ENCODE measurements at regions of chr5 and their contacts with region 1.

Region 1: GRCh38 chr5:145915970-145916638 is 20.3 kb upstream of the SH3RF2 start:
- DNase-seq: no peak
- H3K4me3 ChIP-seq: no peak overlapping the region
- H3K27ac ChIP-seq: no peak overlapping the region
- H3K4me1 ChIP-seq: no peaks in the 10 kb centered on the region
- H3K27me3 ChIP-seq: no peaks in the 10 kb centered on the region
- CTCF ChIP-seq: no peak
- POLR2A ChIP-seq: no peak

Region 2: DNA sequence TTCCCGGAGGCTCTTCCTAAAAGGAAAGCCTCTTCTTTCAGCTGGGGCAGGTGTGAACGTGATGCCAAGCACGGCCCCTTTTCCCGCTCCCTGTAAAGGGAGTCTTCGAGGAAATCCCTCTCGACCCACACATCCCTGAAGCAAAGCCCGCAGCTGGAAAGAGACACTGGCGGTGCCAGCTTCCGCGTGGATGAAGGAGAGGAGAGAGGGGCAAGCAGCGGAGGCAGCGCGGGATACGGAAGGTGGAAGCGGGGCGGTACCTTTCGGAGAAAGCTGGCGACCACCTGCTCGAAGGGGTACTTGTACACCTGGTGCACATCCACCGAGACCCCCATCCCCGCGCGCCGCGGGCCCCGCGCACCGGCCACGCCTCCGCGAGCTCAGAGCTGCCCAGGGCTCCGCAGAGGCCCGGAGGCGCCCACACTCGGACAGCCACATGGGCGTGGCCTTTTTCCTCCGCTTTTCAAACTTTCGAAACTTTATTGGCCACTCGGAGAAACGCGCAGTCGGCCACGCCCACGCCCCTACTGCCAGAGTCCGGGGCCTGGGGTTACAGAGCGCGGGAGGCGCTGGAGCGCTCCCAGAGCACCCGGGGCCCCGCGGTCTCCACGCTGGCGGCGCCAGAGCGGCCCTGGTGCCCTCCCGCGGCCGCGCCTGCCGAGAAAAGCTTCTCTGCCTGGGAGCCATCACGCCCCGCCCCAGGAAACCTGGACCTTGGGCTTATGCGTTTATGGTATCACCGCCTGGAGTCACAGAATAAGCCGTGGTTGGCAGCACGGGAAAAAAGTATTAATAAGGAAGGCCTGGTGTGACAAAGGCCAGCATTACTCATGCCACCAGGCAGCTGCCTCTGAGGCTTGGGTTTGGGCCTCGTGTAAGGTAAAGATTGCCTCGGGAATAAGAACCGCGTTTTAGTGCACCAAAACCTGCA is 80.9 kb before region 1 on chr5 and contains the start of gene PRELID2:
- intact Hi-C with region 1: no loop called
- DNase-seq: peak; percentile 78 to 85
- H3K4me3 ChIP-seq: peak within 1 kb of the TSS; percentile 58 to 85 (median 75)
- H3K27ac ChIP-seq: peak within 1 kb of the TSS; percentile 63 to 86
- H3K4me1 ChIP-seq: peaks cover 0 to 7% of the 10 kb centered on the region in 2 donors
- H3K27me3 ChIP-seq: no peaks in the 10 kb centered on the region
- CTCF ChIP-seq: no peak
- POLR2A ChIP-seq: no peak
- total RNA-seq, gene PRELID2: 15.5 to 24.6 (median 23.1) TPM

Region 3: GRCh38 chr5:145903113-145903512 is 13.0 kb before region 1 on chr5:
- intact Hi-C with region 1: no loop called
- DNase-seq: no peak
- H3K4me3 ChIP-seq: no peak overlapping the region
- H3K27ac ChIP-seq: no peak overlapping the region
- H3K4me1 ChIP-seq: no peaks in the 10 kb centered on the region
- H3K27me3 ChIP-seq: no peaks in the 10 kb centered on the region
- CTCF ChIP-seq: no peak
- POLR2A ChIP-seq: no peak

Region 4: GRCh38 chr5:145971696-145972095 is 55.6 kb after region 1 on chr5:
- intact Hi-C with region 1: loop called (anchors 2 kb)
- DNase-seq: no peak
- H3K4me3 ChIP-seq: no peak overlapping the region
- H3K27ac ChIP-seq: no peak overlapping the region
- H3K4me1 ChIP-seq: no peaks in the 10 kb centered on the region
- H3K27me3 ChIP-seq: no peaks in the 10 kb centered on the region
- CTCF ChIP-seq: no peak
- POLR2A ChIP-seq: no peak

Measured in breast epithelium (tissue), 4 donors.